ENCODE measurements at regions of chr9 and their contacts with region 1.

Region 1: DNA sequence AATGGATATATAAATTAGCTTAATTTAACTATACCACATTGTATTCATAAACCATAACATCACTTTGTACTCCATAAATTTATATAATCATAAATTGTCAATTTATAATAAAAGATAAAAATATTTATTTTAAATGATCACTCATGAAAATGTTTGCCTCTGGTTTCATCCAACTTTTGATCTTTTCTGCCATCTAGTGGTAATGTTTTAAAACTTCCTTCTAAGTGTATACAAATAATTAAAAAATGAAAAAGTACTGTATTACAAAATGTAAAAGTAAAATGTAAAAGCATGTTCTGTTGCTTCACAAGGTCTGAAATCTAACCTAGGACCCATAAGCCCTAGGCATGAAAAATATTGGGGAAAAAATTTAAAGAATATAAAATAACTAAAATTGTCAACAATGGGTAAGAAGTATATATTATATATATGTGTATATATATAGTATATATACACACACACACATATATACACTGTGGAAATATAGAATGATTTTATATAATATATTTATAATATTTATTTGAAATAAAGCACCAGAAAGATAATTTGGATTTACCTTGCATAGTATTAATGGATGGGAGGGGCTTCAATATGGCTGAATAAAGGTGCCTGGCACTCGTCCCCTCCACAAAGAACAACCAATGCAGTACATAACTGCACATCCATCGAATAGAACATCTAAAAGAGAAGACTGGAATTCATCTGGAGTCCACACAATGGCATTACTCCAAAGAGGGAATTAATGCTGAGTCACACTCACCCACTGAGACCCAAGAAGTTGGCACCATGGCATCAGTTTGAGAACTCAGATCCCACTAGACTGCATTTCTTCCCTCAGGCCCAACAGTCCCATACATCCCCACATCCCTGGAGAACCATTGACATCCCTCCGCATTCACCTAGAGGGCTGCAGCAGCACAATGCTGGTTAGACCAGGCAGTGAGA is 32.5 kb downstream of the ANXA1 start:
- DNase-seq: no peak
- H3K4me3 ChIP-seq: no peak overlapping the region
- H3K27ac ChIP-seq: no peak overlapping the region
- H3K4me1 ChIP-seq: peaks cover 0 to 17% (median 3%) of the 10 kb centered on the region in 4 donors
- H3K27me3 ChIP-seq: no peaks in the 10 kb centered on the region
- CTCF ChIP-seq: peak; percentile 49 to 58

Region 2: DNA sequence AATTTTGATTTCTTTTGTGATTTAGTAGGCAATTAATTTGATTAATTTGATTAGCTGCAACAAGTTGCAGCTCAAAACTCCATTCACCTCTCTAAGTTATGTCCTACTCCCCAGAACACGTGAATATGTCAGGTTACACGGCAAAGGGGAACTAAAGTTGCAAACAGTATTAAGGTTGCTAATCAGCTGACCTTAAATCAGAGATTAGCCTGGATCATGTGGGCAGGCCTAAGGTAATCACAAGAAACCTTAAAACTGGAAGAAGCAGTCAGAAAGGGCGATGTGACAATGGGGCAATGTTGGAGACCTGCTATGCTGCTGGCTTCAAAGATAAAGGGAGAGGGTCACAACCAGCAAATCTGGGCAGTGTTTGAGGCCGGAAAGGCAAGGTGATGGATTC is 79.8 kb before region 1 on chr9:
- intact Hi-C with region 1: loop called (anchors 5 kb)
- DNase-seq: no peak
- H3K4me3 ChIP-seq: no peak overlapping the region
- H3K27ac ChIP-seq: no peak overlapping the region
- H3K4me1 ChIP-seq: peaks cover 0 to 12% (median 0%) of the 10 kb centered on the region in 4 donors
- H3K27me3 ChIP-seq: no peaks in the 10 kb centered on the region
- CTCF ChIP-seq: no peak

Measured in tibial artery (tissue), 4 donors.